MCF 10A (cell line): ENCODE measurements at regions of chr5 and their contacts with region 1.

Region 1: DNA sequence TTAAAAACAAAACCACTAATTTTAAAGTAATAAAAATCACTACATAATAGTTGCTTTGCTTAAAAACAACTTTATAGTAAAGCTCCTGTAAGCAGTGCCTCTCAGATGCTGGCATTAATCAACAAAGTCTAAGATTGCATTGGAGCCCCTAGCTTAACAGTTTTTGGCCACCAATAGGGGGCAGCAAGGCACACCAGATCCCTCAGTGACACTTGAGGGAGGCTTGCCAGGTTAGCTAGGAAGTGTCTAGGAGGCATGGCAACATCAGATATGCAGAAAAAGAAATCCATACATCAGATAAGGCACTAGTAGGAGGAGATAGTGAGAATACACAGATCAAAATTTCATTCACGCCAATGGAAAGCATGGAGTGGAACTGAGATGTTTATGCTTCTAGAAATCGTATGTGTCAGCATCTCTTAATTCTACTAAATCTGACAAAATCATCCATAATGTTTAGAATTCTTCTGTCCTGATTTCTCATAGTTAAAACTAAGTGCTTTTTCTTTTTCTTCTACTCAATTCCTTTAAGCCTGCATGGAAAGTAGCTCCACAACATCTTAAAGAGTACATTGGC is 73.6 kb upstream of the PAM start:
- DNase-seq: peak; percentile 86
- H3K4me3 Mint-ChIP-seq: no peak overlapping the region
- H3K27ac Mint-ChIP-seq: no peak overlapping the region
- H3K4me1 Mint-ChIP-seq: peaks cover 6% of the 10 kb centered on the region
- H3K27me3 Mint-ChIP-seq: no peaks in the 10 kb centered on the region
- CTCF ChIP-seq: peak; percentile 75

Region 2: GRCh38 chr5:102536323-102536928 is 145.1 kb before region 1 on chr5:
- CTCF ChIA-PET with region 1: interaction called, 18 read pairs
- POLR2A ChIA-PET with region 1: no interaction called
- intact Hi-C with region 1: loop called (anchors 5 kb)
- DNase-seq: peak; percentile 17
- H3K4me3 Mint-ChIP-seq: no peak overlapping the region
- H3K27ac Mint-ChIP-seq: no peak overlapping the region
- H3K4me1 Mint-ChIP-seq: no peaks in the 10 kb centered on the region
- H3K27me3 Mint-ChIP-seq: peaks cover 11% of the 10 kb centered on the region
- CTCF ChIP-seq: peak; percentile 54

Region 3: DNA sequence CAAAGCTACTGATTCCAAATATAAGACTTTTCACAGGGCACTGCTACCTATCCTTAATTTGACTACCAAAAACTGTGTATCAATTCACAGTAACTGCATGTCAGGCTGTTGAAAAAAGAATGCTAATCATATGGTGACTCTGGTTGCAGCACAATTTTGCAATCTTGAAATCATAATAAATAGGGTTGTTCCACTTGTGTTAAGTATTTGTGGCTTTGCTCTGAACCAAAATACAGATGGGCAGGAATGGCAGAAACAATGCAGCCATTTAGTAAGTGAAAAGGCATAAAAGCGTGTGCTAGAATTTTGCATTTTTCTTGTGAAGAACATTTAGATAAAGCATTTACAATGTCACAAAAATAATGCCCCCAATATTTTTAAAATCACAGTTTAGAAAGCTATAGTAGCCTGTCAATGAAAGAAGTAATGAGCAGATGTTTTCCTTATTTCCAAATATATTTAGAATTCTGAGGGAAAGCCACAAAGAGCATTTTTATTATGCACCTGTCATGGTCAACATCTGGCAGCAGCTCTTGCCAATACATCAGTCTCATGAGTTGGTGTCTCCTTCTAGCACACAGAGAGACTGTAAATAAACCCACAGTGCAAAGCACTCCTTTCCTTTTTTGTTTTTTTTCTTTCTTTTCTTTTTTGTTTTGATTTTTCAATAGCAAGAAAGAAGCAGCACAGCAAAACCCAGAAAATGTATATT is 18.8 kb after region 1 on chr5:
- CTCF ChIA-PET with region 1: interaction called, 16 read pairs
- POLR2A ChIA-PET with region 1: no interaction called
- intact Hi-C with region 1: no loop called
- DNase-seq: no peak
- H3K4me3 Mint-ChIP-seq: no peak overlapping the region
- H3K27ac Mint-ChIP-seq: no peak overlapping the region
- H3K4me1 Mint-ChIP-seq: no peaks in the 10 kb centered on the region
- H3K27me3 Mint-ChIP-seq: no peaks in the 10 kb centered on the region
- CTCF ChIP-seq: no peak

Region 4: DNA sequence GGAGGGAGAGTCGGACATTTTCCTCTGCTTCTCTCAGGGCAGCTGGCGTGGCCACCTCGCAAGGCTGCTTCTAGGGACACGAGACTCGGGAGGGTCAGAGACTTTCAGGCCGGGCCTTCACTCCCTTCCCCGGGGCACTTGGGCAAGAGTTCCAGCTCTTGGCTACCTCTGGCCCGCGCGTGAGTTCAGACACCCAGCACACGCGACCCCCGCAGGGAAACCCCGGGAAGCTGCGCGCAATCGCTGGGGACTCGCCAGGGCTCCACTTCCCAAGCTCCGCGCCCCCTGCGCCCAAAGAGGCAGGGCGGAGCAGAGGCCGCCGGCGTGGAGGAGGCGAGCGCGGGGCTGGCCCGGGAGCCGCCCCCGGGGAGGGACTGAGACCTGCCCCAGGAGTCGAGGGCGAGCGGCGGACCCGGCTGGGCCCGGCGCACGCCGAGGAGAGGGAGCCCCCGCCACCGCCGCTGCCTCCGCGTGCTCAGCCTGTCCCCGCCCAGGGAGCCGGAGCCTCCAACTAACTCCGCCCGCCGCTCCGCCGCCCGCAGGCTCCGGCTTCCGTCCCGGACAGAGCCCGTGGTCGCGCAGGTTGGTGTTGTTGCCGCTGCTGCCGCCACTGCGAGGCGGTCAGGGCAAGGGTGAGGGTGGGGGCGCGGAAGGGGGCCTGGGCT is 73.4 kb after region 1 on chr5 and contains the start of gene PAM:
- CTCF ChIA-PET with region 1: interaction called, 9 read pairs
- POLR2A ChIA-PET with region 1: interaction called, 12 read pairs
- intact Hi-C with region 1: loop called (anchors 1 kb)
- DNase-seq: peak; percentile 75
- H3K4me3 Mint-ChIP-seq: peak within 1 kb of the TSS; percentile 98
- H3K27ac Mint-ChIP-seq: peak within 1 kb of the TSS; percentile 88
- H3K4me1 Mint-ChIP-seq: peaks cover 22% of the 10 kb centered on the region
- H3K27me3 Mint-ChIP-seq: no peaks in the 10 kb centered on the region
- CTCF ChIP-seq: no peak
- total RNA-seq, gene PAM: 60.3 and 64.3 TPM in 2 replicates

Region 5: DNA sequence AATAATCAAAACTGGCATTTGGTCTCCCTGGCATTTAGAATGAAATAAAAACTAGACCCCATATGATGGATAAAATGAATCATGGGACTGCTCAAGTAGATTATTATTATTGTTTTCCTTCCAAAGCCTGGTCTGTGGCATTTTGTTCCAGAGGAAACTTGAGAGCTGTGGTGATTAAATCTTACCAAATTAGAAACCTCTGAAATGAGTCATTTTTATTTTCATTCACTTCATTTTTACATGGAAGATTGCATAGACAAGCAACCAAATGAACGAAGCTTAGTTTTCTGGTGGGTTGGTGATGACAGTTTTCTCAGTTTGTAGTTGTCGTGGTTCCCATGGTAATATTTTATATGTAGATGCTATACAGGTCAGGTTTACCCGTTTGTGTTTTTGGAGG is 97.0 kb after region 1 on chr5:
- CTCF ChIA-PET with region 1: interaction called, 23 read pairs
- POLR2A ChIA-PET with region 1: no interaction called
- intact Hi-C with region 1: loop called (anchors 1 kb)
- DNase-seq: peak; percentile 58
- H3K4me3 Mint-ChIP-seq: no peak overlapping the region
- H3K27ac Mint-ChIP-seq: peak overlapping the region; percentile 46
- H3K4me1 Mint-ChIP-seq: peaks cover 31% of the 10 kb centered on the region
- H3K27me3 Mint-ChIP-seq: no peaks in the 10 kb centered on the region
- CTCF ChIP-seq: no peak

Region 6: GRCh38 chr5:102865510-102866236 is 184.2 kb after region 1 on chr5:
- CTCF ChIA-PET with region 1: interaction called, 7 read pairs
- POLR2A ChIA-PET with region 1: no interaction called
- intact Hi-C with region 1: loop called (anchors 5 kb)
- DNase-seq: peak; percentile 68
- H3K4me3 Mint-ChIP-seq: peak overlapping the region; percentile 73
- H3K27ac Mint-ChIP-seq: peak overlapping the region; percentile 73
- H3K4me1 Mint-ChIP-seq: peaks cover 7% of the 10 kb centered on the region
- H3K27me3 Mint-ChIP-seq: no peaks in the 10 kb centered on the region
- CTCF ChIP-seq: no peak

Region 7: DNA sequence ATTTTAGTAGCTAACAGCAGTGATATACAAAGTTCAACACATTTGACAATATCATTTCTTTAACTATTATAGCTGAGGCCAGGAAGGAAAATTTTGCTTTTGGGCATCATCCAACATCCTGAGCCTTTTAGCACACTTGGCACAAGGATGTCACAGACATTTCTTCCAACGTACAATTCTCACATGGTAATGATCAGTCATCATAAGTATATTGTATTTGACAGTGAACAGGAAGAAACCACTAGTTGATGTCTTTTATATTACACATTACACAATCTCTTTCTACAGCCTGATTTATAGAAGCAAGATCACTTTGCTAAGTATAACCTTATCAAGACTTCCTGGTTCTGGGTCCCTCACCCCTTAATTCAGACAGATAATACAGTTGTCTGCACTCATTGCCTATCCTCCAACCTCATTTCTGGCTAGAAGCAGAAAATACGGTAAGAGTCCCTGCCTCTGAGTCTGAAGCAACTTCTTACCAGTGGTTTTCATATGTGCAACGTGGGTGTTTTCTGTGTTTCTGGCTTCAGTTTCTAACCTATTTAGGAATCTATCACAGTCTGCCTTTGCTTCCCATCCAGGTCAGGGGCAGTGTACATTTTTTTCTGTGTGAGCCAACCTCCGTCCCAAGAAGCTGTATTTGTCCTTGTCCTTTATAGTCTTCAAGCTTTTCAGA is 241.4 kb after region 1 on chr5:
- CTCF ChIA-PET with region 1: no interaction called
- POLR2A ChIA-PET with region 1: no interaction called
- intact Hi-C with region 1: no loop called
- DNase-seq: no peak
- H3K4me3 Mint-ChIP-seq: no peak overlapping the region
- H3K27ac Mint-ChIP-seq: no peak overlapping the region
- H3K4me1 Mint-ChIP-seq: no peaks in the 10 kb centered on the region
- H3K27me3 Mint-ChIP-seq: no peaks in the 10 kb centered on the region
- CTCF ChIP-seq: no peak

Region 8: DNA sequence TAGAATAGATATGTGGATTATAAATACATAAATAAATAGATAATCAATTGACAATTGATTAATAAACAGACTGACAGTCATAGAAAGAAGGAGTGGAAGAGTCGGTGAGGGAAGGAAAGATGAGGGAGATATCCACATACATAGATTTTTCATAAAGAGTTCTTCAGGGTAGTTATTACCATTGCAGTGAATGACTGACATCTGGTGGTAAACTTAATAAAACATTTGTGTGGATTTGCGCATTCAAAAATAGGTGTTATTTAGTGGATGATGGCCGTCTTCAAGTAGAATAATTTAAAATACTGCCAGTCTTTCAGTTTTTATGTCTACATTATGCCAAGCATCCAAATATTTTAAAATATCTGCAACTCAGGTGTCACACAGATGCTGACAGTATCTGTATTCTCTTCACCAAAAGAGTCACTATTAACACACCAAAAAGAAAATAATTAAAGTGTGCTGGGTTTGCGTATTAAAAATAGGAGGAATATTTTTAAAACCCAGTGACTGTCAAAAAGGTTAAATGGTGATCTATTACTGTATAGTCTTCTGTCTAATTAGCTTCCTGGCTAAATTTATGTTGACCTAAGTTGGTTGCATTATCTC is 359.7 kb after region 1 on chr5:
- CTCF ChIA-PET with region 1: interaction called, 29 read pairs
- POLR2A ChIA-PET with region 1: no interaction called
- intact Hi-C with region 1: loop called (anchors 1 kb)
- DNase-seq: peak; percentile 59
- H3K4me3 Mint-ChIP-seq: no peak overlapping the region
- H3K27ac Mint-ChIP-seq: no peak overlapping the region
- H3K4me1 Mint-ChIP-seq: no peaks in the 10 kb centered on the region
- H3K27me3 Mint-ChIP-seq: no peaks in the 10 kb centered on the region
- CTCF ChIP-seq: peak; percentile 53